ENCODE measurements at regions of chr2 and their contacts with region 1.

Region 1: GRCh38 chr2:48306409-48307284 is 223.3 kb upstream of the STON1 start:
- DNase-seq: peak; percentile 47
- ATAC-seq: peak; percentile 94 to 97
- H3K4me3 ChIP-seq: no peak overlapping the region
- H3K27ac ChIP-seq: peak overlapping the region; percentile 80 to 92 (median 84)
- H3K4me1 ChIP-seq: peaks cover 4 to 27% of the 10 kb centered on the region in 2 donors
- H3K27me3 ChIP-seq: no peaks in the 10 kb centered on the region
- CTCF ChIP-seq: no peak
- POLR2A ChIP-seq: no peak

Region 2: DNA sequence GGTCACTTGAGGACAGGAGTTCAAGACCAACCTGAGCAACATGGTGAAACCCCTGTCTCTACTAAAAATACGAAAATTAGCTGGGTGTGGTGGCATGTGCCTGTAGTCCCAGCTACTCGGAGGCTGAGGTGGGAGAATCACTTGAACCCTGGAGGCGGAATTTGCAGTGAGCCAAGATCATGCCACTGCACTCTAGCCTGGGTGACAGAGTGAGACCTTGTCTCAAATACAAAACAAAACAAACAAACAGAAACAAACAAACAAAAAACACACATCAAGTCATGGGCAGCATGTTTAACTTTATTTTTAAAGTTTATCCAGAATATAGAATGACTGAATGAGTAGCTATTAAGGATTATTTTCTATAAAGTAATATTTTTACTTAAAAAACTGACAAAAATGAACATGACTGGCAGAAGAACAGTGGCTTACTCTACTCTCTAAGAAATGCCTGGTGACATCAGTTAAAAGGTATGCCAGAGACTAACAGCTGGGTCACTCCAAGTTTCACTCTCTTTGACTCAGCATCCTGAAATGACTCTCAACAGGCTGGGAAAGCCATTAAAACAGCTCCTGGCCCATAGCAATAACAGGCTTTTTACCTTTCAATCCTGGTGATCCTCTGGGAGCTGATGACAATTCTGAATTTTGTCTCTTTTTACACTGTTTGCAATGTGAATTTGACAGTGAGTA is 58.3 kb before region 1 on chr2:
- in situ Hi-C with region 1: loop called in 1 of 4 experiments (anchors 10 kb)
- intact Hi-C with region 1: loop called (anchors 2 kb)
- DNase-seq: peak; percentile 11 to 32
- ATAC-seq: peak; percentile 86 to 92
- H3K4me3 ChIP-seq: no peak overlapping the region
- H3K27ac ChIP-seq: peak overlapping the region; percentile 53 to 82 (median 66)
- H3K4me1 ChIP-seq: peaks cover 34 to 38% of the 10 kb centered on the region in 2 donors
- H3K27me3 ChIP-seq: no peaks in the 10 kb centered on the region
- CTCF ChIP-seq: no peak
- POLR2A ChIP-seq: no peak

Region 3: GRCh38 chr2:48282161-48282680 is 24.4 kb before region 1 on chr2:
- in situ Hi-C with region 1: no loop called
- intact Hi-C with region 1: loop called (anchors 1 kb)
- DNase-seq: no peak
- ATAC-seq: peak; percentile 88 to 98
- H3K4me3 ChIP-seq: no peak overlapping the region
- H3K27ac ChIP-seq: peak overlapping the region; percentile 62 to 73 (median 64)
- H3K4me1 ChIP-seq: peaks cover 14 to 24% of the 10 kb centered on the region in 2 donors
- H3K27me3 ChIP-seq: no peaks in the 10 kb centered on the region
- CTCF ChIP-seq: no peak
- POLR2A ChIP-seq: no peak

Measured in gastrocnemius medialis (tissue), 4 donors.